ENCODE measurements at regions of chrX and their contacts with region 1.

Region 1: DNA sequence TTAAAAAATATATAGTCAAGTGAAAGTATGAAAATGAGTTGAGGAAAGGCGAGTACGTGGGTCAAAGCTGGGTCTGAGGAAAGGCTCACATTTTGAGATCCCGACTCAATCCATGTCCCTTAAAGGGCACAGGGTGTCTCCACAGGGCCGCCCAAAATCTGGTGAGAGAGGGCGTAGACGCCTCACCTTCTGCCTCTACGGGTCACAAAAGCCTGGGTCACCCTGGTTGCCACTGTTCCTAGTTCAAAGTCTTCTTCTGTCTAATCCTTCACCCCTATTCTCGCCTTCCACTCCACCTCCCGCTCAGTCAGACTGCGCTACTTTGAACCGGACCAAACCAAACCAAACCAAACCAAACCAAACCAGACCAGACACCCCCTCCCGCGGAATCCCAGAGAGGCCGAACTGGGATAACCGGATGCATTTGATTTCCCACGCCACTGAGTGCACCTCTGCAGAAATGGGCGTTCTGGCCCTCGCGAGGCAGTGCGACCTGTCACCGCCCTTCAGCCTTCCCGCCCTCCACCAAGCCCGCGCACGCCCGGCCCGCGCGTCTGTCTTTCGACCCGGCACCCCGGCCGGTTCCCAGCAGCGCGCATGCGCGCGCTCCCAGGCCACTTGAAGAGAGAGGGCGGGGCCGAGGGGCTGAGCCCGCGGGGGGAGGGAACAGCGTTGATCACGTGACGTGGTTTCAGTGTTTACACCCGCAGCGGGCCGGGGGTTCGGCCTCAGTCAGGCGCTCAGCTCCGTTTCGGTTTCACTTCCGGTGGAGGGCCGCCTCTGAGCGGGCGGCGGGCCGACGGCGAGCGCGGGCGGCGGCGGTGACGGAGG is at the start of gene FMR1:
- DNase-seq: peak; percentile 83 to 95 (median 93)
- ATAC-seq: peak; percentile 96
- H3K4me3 ChIP-seq: peak within 1 kb of the TSS; percentile 71
- H3K4me3 Mint-ChIP-seq: peak within 1 kb of the TSS; percentile 87 to 98 (median 96)
- H3K27ac ChIP-seq: peak within 1 kb of the TSS; percentile 93
- H3K27ac Mint-ChIP-seq: peak within 1 kb of the TSS; percentile 87 to 97 (median 94)
- H3K4me1 ChIP-seq: peaks cover 0 to 35% of the 10 kb centered on the region in 2 donors
- H3K4me1 Mint-ChIP-seq: peaks cover 7 to 43% (median 34%) of the 10 kb centered on the region in 7 donors
- H3K27me3 ChIP-seq: no peaks in the 10 kb centered on the region
- H3K27me3 Mint-ChIP-seq: peaks cover 0 to 2% (median 0%) of the 10 kb centered on the region in 5 donors
- total RNA-seq, gene FMR1: 50.6 to 84.2 (median 76.8) TPM

Region 2: GRCh38 chrX:147763131-147763530 is 148.3 kb before region 1 on chrX:
- CTCF ChIA-PET with region 1: no interaction called
- POLR2A ChIA-PET with region 1: no interaction called
- intact Hi-C with region 1: loop called in 1 of 2 experiments (anchors 10 kb)
- DNase-seq: peak in 1 of 9 donors; percentile 5
- ATAC-seq: no peak
- H3K4me3 ChIP-seq: no peak overlapping the region
- H3K4me3 Mint-ChIP-seq: peak overlapping the region in 3 of 10 donors; percentile 16 to 64 (median 19)
- H3K27ac ChIP-seq: no peak overlapping the region
- H3K27ac Mint-ChIP-seq: peak overlapping the region in 1 of 9 donors; percentile 73
- H3K4me1 ChIP-seq: no peaks in the 10 kb centered on the region
- H3K4me1 Mint-ChIP-seq: peaks cover 0 to 21% (median 8%) of the 10 kb centered on the region in 7 donors
- H3K27me3 ChIP-seq: no peaks in the 10 kb centered on the region
- H3K27me3 Mint-ChIP-seq: peaks cover 0 to 3% (median 0%) of the 10 kb centered on the region in 5 donors

Region 3: GRCh38 chrX:147923605-147924004 is 12.2 kb after region 1 on chrX:
- CTCF ChIA-PET with region 1: no interaction called
- POLR2A ChIA-PET with region 1: interaction called, 3 read pairs
- intact Hi-C with region 1: loop called in 1 of 2 experiments (anchors 1 kb)
- DNase-seq: no peak
- ATAC-seq: no peak
- H3K4me3 ChIP-seq: no peak overlapping the region
- H3K4me3 Mint-ChIP-seq: peak overlapping the region in 1 of 10 donors; percentile 12
- H3K27ac ChIP-seq: no peak overlapping the region
- H3K27ac Mint-ChIP-seq: no peak overlapping the region
- H3K4me1 ChIP-seq: peaks cover 10 to 16% of the 10 kb centered on the region in 2 donors
- H3K4me1 Mint-ChIP-seq: peaks cover 15 to 49% (median 40%) of the 10 kb centered on the region in 7 donors
- H3K27me3 ChIP-seq: no peaks in the 10 kb centered on the region
- H3K27me3 Mint-ChIP-seq: no peaks in the 10 kb centered on the region

Region 4: GRCh38 chrX:147933815-147934214 is 22.4 kb after region 1 on chrX:
- CTCF ChIA-PET with region 1: no interaction called
- POLR2A ChIA-PET with region 1: no interaction called
- intact Hi-C with region 1: loop called in 1 of 2 experiments (anchors 2 kb)
- DNase-seq: no peak
- ATAC-seq: no peak
- H3K4me3 ChIP-seq: no peak overlapping the region
- H3K4me3 Mint-ChIP-seq: no peak overlapping the region
- H3K27ac ChIP-seq: no peak overlapping the region
- H3K27ac Mint-ChIP-seq: peak overlapping the region in 1 of 9 donors; percentile 28
- H3K4me1 ChIP-seq: no peaks in the 10 kb centered on the region
- H3K4me1 Mint-ChIP-seq: peaks cover 0 to 4% (median 0%) of the 10 kb centered on the region in 7 donors
- H3K27me3 ChIP-seq: no peaks in the 10 kb centered on the region
- H3K27me3 Mint-ChIP-seq: no peaks in the 10 kb centered on the region